Spleen (tissue), 13 donors: ENCODE measurements at regions of chr10 and their contacts with region 1.

Region 1: DNA sequence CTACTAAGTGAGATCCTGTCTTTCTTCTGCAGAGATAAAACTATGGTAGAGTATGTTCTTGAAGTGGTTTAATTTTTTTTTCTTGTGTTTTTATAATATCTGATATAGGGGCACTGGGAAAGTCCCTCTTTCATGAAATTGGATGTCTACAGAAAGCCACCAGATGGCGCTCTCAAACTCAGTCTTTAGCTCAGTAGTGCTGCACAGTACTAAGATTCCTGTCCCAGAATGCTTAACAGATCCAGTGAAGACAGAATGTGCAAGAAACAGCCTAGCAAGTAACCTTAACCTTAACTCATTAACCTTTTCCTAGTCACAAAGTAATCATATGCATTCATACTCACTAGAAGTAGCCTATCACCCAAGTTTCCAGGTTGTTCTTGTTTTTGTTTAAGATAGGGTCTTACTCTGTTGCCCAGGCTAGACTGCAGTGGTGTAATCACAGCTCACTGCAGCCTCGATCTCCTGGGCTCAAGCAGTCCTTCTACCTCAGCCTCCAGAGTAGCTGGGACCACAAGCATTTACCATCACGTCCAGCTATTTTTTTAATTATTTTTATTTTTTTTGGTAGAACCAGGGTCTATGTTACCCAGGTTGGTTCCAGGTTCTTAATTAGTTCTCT is 56.7 kb downstream of the IDE start:
- DNase-seq: no peak
- H3K4me3 ChIP-seq: no peak overlapping the region
- H3K27ac ChIP-seq: no peak overlapping the region
- H3K4me1 ChIP-seq: peaks cover 0 to 10% (median 0%) of the 10 kb centered on the region in 6 donors
- H3K27me3 ChIP-seq: no peaks in the 10 kb centered on the region
- CTCF ChIP-seq: peak; percentile 47 to 88 (median 78)
- POLR2A ChIP-seq: no peak

Region 2: GRCh38 chr10:92103376-92104090 is 413.6 kb before region 1 on chr10:
- intact Hi-C with region 1: no loop called
- DNase-seq: no peak
- H3K4me3 ChIP-seq: no peak overlapping the region
- H3K27ac ChIP-seq: no peak overlapping the region
- H3K4me1 ChIP-seq: peaks cover 0 to 30% (median 11%) of the 10 kb centered on the region in 6 donors
- H3K27me3 ChIP-seq: no peaks in the 10 kb centered on the region
- CTCF ChIP-seq: no peak
- POLR2A ChIP-seq: no peak

Region 3: DNA sequence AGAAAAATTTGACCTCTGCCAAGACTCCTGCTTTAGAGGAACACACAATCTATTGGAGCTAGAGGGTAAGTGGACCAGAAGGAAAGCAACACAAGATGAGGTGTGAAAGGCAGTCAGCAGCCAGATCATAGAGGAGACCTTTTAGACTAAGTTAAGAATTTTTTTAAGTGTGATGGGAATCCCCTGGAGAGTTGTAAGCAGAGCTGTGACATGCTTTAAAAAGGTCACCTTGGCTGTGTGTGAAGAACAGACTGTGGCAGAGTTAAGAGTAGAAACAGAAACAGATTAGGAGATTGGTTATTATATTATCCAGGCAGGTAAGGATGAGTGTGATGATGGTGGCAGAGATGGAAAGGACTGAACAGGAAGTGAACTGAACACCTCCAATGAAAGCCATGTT is 249.8 kb before region 1 on chr10:
- intact Hi-C with region 1: no loop called
- DNase-seq: no peak
- H3K4me3 ChIP-seq: no peak overlapping the region
- H3K27ac ChIP-seq: no peak overlapping the region
- H3K4me1 ChIP-seq: peaks cover 0 to 15% (median 0%) of the 10 kb centered on the region in 6 donors
- H3K27me3 ChIP-seq: no peaks in the 10 kb centered on the region
- CTCF ChIP-seq: no peak
- POLR2A ChIP-seq: no peak

Region 4: GRCh38 chr10:92573798-92574547 is 56.8 kb after region 1 on chr10 and contains the start of gene IDE:
- intact Hi-C with region 1: loop called (anchors 5 kb)
- DNase-seq: peak; percentile 97
- H3K4me3 ChIP-seq: peak within 1 kb of the TSS; percentile 78 to 98 (median 88)
- H3K27ac ChIP-seq: peak within 1 kb of the TSS; percentile 82 to 95 (median 92)
- H3K4me1 ChIP-seq: peaks cover 17 to 69% (median 33%) of the 10 kb centered on the region in 6 donors
- H3K27me3 ChIP-seq: no peaks in the 10 kb centered on the region
- CTCF ChIP-seq: peak in 9 of 11 experiments; percentile 62 to 90 (median 83)
- POLR2A ChIP-seq: peak in 2 of 3 donors; percentile 29 to 52
- total RNA-seq, gene IDE: 22.4 to 35.2 (median 31.9) TPM